K562 (cell line): ENCODE measurements at regions of chr11 and their contacts with region 1.

Region 1: DNA sequence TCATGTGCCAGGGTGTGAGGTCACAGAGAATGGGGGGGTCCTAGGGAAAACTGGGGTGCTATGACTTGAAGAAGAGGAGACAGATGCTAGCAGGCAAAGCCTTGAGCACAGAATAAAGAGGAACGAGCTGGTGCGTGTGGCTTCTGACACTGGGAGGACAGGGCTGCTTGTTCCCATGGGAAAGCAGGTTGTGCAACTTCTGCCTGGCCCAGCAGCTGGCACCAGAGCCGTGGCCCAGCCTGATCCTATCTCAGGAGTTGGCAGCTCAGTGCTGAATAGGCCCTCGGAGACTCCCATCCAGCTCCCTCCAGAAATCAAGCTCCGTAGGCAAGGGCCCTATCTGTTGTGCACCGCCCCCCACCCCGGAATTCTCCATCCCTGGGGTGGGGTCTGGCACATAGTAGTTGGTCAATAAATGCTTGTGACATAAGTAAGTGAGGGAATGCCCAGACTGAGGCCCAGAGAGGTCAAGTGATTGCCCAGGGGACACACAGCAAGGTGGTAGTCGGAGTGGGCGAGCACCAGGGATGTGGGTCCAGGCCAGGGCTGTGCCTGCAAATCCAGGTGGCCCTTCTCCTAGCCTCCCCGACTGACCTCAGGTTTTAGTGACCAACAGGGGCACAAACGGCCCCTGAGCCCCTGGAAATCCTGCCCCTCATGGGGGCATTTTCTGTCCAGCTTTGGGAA is 19.5 kb upstream of the FADD start:
- DNase-seq: no peak
- ATAC-seq: no peak
- H3K4me3 ChIP-seq: no peak overlapping the region
- H3K27ac ChIP-seq: no peak overlapping the region
- H3K4me1 ChIP-seq: peaks cover 0 to 14% of the 10 kb centered on the region in 2 experiments; a peak in 2 of 5 replicates
- H3K27me3 ChIP-seq: peaks cover 43 to 89% of the 10 kb centered on the region in 2 experiments; a peak in 4 of 5 replicates
- CTCF ChIP-seq: no peak
- EP300 ChIP-seq: no peak
- POLR2A ChIP-seq: no peak
- RAD21 ChIP-seq: no peak

Region 2: DNA sequence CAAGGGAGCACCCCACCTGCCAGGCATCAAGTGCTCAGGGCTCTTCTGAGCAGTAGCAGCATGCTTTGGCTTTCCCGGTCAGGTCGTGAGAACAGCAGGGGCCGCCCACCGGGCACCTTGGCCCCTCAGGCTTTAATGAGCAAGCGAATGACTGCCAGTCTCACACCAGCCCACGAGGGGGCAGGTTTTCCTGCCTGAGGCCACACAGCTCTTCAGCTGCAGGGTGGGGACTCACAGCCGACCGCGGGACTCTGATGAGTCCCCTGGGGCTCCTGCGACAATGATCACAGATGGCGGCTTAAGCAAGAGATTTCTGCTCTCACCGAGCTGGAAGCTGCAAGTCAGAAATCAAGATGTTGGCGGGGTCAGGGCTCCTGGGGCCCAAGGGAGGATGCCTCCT is 465.5 kb before region 1 on chr11:
- CTCF ChIA-PET with region 1: no interaction called
- POLR2A ChIA-PET with region 1: no interaction called
- in situ Hi-C with region 1: loop called (anchors 10 kb)
- intact Hi-C with region 1: no loop called
- DNase-seq: peak; percentile 58 to 75 (median 70)
- ATAC-seq: peak; percentile 89
- H3K4me3 ChIP-seq: no peak overlapping the region
- H3K27ac ChIP-seq: no peak overlapping the region
- H3K4me1 ChIP-seq: no peaks in the 10 kb centered on the region; a peak in 1 of 5 replicates
- H3K27me3 ChIP-seq: peaks cover 32 to 73% of the 10 kb centered on the region in 2 experiments
- CTCF ChIP-seq: peak; percentile 50 to 70 (median 64)
- EP300 ChIP-seq: no peak
- POLR2A ChIP-seq: no peak
- RAD21 ChIP-seq: peak in 1 of 2 experiments; percentile 54; a peak in 2 of 4 replicates

Region 3: GRCh38 chr11:70090961-70091381 is 92.7 kb before region 1 on chr11:
- CTCF ChIA-PET with region 1: no interaction called
- POLR2A ChIA-PET with region 1: no interaction called
- in situ Hi-C with region 1: loop called (anchors 5 kb)
- intact Hi-C with region 1: no loop called
- DNase-seq: no peak
- ATAC-seq: no peak
- H3K4me3 ChIP-seq: no peak overlapping the region
- H3K27ac ChIP-seq: no peak overlapping the region
- H3K4me1 ChIP-seq: peaks cover 0 to 6% of the 10 kb centered on the region in 2 experiments; a peak in 2 of 5 replicates
- H3K27me3 ChIP-seq: peaks cover 35 to 79% of the 10 kb centered on the region in 2 experiments
- CTCF ChIP-seq: no peak
- EP300 ChIP-seq: no peak
- POLR2A ChIP-seq: no peak
- RAD21 ChIP-seq: no peak

Region 4: DNA sequence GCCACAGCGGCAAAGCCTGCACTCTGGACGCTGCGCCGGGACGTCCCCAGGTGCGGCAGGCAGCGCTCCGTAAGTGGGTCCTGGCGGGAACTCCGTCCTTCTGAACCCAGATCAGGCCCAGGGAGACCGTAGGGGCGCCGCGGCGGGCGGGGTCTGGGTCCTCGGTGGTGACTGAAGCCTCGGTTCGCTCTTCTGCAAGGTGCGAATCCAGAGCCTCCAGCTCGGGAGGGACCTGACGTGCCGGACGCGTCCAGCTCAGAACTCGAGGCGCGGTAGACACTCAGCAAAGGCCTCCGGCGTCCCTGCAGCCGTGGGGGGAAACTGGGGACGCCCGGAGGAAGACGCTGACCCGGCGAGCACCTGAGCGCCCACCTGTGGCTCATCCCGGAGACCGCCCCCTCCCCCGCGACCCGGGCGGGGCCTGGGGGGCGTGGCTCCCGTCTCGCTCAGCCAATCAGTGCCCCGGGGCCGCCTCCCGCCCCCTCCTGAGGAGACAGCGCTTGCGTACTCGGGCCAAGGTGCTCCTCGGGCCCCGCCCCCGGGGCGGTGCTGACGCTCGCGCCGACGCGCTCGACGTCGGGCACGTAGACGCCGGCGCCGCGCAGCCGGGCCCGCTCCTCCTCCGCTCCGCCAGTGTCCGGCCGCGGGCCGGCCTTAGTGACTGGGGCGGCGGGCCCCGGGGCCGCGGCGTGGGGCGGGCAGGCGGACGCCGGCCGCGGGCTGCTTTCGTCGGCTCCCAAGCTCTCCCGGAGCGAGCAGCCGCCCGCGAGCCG is 86.7 kb after region 1 on chr11 and contains the start of gene PPFIA1:
- CTCF ChIA-PET with region 1: no interaction called
- POLR2A ChIA-PET with region 1: no interaction called
- in situ Hi-C with region 1: no loop called
- intact Hi-C with region 1: no loop called
- DNase-seq: peak; percentile 97 to 99 (median 99)
- ATAC-seq: peak; percentile 97
- H3K4me3 ChIP-seq: peak within 1 kb of the TSS; percentile 91
- H3K27ac ChIP-seq: peak within 1 kb of the TSS; percentile 87
- H3K4me1 ChIP-seq: peaks cover 18 to 20% of the 10 kb centered on the region in 2 experiments; a peak in 4 of 5 replicates
- H3K27me3 ChIP-seq: peaks cover 11 to 20% of the 10 kb centered on the region in 2 experiments
- CTCF ChIP-seq: peak in 1 of 3 experiments; percentile 23; a peak in 1 of 6 replicates
- EP300 ChIP-seq: no peak
- POLR2A ChIP-seq: no peak
- RAD21 ChIP-seq: no peak
- polyA plus RNA-seq, gene PPFIA1: 9.9 to 13.3 TPM

Region 5: GRCh38 chr11:70358753-70359152 is 175.1 kb after region 1 on chr11:
- CTCF ChIA-PET with region 1: no interaction called
- POLR2A ChIA-PET with region 1: no interaction called
- in situ Hi-C with region 1: no loop called
- intact Hi-C with region 1: no loop called
- DNase-seq: no peak
- ATAC-seq: no peak
- H3K4me3 ChIP-seq: no peak overlapping the region
- H3K27ac ChIP-seq: no peak overlapping the region
- H3K4me1 ChIP-seq: no peaks in the 10 kb centered on the region
- H3K27me3 ChIP-seq: no peaks in the 10 kb centered on the region
- CTCF ChIP-seq: no peak
- EP300 ChIP-seq: no peak
- POLR2A ChIP-seq: no peak
- RAD21 ChIP-seq: no peak